ENCODE measurements at regions of chr9 and their contacts with region 1.

Region 1: DNA sequence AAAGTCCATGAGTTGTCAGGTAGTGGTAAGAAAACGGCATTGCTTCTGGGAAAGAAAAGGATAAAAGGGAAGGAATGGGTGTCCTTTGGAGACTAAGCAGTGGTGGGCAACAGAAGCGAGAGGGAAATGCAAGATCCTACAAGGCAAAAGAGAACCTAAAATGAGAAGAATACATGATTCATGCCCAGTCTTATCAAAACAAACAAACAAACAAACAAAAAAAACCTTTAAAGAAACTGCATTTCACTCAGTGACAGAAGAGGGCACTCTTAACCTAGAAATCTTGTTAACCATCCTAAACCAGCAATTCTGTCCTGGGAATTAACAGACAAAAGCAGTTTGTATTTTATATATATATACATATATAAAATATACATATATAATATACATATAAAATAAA is 88.5 kb downstream of the SUSD1 start:
- DNase-seq: no peak
- H3K4me3 ChIP-seq: no peak overlapping the region
- H3K27ac ChIP-seq: no peak overlapping the region
- H3K4me1 ChIP-seq: peaks cover 0 to 5% (median 0%) of the 10 kb centered on the region in 6 donors
- H3K27me3 ChIP-seq: no peaks in the 10 kb centered on the region
- CTCF ChIP-seq: peak; percentile 7 to 62 (median 39)
- POLR2A ChIP-seq: no peak

Region 2: GRCh38 chr9:111316796-111317195 is 769.8 kb before region 1 on chr9:
- intact Hi-C with region 1: no loop called
- DNase-seq: no peak
- H3K4me3 ChIP-seq: no peak overlapping the region
- H3K27ac ChIP-seq: no peak overlapping the region
- H3K4me1 ChIP-seq: no peaks in the 10 kb centered on the region
- H3K27me3 ChIP-seq: peaks cover 0 to 5% (median 0%) of the 10 kb centered on the region in 7 donors
- CTCF ChIP-seq: no peak
- POLR2A ChIP-seq: no peak

Region 3: GRCh38 chr9:112157087-112157486 is 70.5 kb after region 1 on chr9:
- intact Hi-C with region 1: no loop called
- DNase-seq: no peak
- H3K4me3 ChIP-seq: no peak overlapping the region
- H3K27ac ChIP-seq: no peak overlapping the region
- H3K4me1 ChIP-seq: peaks cover 0 to 2% (median 0%) of the 10 kb centered on the region in 6 donors
- H3K27me3 ChIP-seq: no peaks in the 10 kb centered on the region
- CTCF ChIP-seq: no peak
- POLR2A ChIP-seq: no peak

Region 4: GRCh38 chr9:112361601-112362000 is 275.0 kb after region 1 on chr9:
- intact Hi-C with region 1: loop called (anchors 5 kb)
- DNase-seq: no peak
- H3K4me3 ChIP-seq: no peak overlapping the region
- H3K27ac ChIP-seq: no peak overlapping the region
- H3K4me1 ChIP-seq: peaks cover 0 to 7% (median 5%) of the 10 kb centered on the region in 6 donors
- H3K27me3 ChIP-seq: no peaks in the 10 kb centered on the region
- CTCF ChIP-seq: peak; percentile 26 to 68 (median 61)
- POLR2A ChIP-seq: no peak

Measured in spleen (tissue), 13 donors.